ENCODE measurements at regions of chr2 and their contacts with region 1.

Region 1: DNA sequence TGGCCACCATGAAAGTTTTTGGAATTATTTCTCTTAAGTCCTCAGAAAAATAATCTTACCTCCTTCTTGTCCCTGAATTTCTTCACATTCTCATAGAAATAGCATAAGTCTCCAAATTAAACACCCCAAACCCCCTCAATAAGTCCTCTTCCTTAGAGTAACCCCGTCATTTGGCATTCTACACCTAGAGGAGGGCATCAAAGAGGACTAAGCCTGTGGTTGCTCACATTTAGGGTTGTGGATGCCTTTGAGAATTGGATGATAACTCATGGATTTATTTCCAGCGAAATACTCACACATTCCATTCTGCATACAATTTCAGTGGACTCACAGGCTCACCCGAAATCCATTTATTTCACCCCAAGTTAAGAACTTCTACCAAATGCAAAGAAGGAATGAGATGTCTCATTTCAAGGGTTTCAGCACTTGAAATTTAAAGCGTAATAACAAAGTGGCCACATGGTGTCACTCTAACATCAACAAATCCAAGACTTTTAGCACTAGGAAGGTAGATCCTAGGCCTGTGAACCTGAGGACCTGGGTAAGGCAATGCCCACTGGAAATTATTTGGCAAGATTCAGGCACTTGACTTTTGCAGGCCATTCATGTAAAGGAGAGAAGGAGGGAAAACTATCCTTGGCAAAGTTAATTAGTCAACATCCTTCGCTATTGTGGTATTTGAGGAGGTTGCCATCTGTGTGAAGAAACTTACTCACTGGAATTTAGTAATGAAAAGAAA is 24.6 kb downstream of the DYTN start:
- DNase-seq: no peak
- ATAC-seq: no peak
- H3K4me3 ChIP-seq: no peak overlapping the region
- H3K27ac ChIP-seq: no peak overlapping the region
- H3K4me1 ChIP-seq: no peaks in the 10 kb centered on the region
- H3K27me3 ChIP-seq: no peaks in the 10 kb centered on the region

Region 2: GRCh38 chr2:206783718-206784117 is 90.2 kb after region 1 on chr2:
- intact Hi-C with region 1: loop called in 1 of 2 experiments (anchors 5 kb)
- DNase-seq: no peak
- ATAC-seq: no peak
- H3K4me3 ChIP-seq: no peak overlapping the region
- H3K27ac ChIP-seq: no peak overlapping the region
- H3K4me1 ChIP-seq: no peaks in the 10 kb centered on the region
- H3K27me3 ChIP-seq: no peaks in the 10 kb centered on the region

Region 3: GRCh38 chr2:206968134-206969086 is 274.8 kb after region 1 on chr2:
- intact Hi-C with region 1: no loop called
- DNase-seq: no peak
- ATAC-seq: peak; percentile 40
- H3K4me3 ChIP-seq: peak overlapping the region in 1 of 2 donors; percentile 31
- H3K27ac ChIP-seq: peak overlapping the region; percentile 66 to 94
- H3K4me1 ChIP-seq: peaks cover 7 to 14% of the 10 kb centered on the region in 2 donors
- H3K27me3 ChIP-seq: no peaks in the 10 kb centered on the region

Region 4: DNA sequence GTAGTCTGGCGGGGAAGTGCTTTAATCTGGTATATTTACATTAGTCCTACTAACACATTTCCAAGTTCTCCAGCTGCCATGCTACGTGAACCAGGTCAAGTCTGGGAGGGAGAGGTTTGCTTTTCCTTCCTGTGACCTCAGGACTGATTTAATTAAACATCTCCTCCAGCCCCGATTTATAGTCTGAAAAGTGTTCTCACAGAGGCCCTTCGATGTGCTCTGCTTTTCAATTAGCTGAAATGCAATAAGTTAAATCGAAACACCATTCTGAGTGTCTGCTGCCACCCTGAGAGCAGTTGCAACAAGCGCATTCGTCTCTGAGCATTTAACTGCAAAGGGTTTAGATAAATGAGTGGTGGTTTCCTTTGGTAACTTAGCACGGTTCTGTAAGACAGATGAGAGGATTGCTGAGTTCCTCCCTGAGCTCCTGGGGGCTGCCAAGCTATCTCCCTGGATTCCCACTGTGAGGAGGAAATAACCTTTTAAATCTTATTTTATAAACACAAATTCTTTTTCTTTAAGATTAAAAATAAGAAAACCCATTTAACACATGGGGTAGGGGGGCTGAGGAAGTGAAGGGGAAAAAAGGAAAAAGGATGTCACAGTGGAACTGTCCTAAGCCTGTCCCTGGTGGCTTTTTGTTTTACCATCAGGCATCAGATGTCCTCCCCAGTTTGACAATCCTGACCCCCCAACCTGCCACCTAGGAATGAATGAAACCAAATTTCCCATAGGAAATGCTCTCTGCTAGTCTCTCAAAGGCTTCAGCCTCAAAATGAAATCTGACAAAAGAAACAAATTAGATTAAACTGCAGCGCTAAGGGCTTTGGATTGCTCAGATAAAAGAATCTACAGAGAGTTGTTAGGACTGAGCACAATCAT is 779.7 kb after region 1 on chr2:
- intact Hi-C with region 1: loop called in 1 of 2 experiments (anchors 10 kb)
- DNase-seq: no peak
- ATAC-seq: peak; percentile 79
- H3K4me3 ChIP-seq: peak overlapping the region in 1 of 2 donors; percentile 2
- H3K27ac ChIP-seq: no peak overlapping the region
- H3K4me1 ChIP-seq: peaks cover 0 to 2% of the 10 kb centered on the region in 2 donors
- H3K27me3 ChIP-seq: no peaks in the 10 kb centered on the region

Measured in aorta (tissue), 5 donors.